ENCODE measurements at regions of chr22 and their contacts with region 1.

Region 1: DNA sequence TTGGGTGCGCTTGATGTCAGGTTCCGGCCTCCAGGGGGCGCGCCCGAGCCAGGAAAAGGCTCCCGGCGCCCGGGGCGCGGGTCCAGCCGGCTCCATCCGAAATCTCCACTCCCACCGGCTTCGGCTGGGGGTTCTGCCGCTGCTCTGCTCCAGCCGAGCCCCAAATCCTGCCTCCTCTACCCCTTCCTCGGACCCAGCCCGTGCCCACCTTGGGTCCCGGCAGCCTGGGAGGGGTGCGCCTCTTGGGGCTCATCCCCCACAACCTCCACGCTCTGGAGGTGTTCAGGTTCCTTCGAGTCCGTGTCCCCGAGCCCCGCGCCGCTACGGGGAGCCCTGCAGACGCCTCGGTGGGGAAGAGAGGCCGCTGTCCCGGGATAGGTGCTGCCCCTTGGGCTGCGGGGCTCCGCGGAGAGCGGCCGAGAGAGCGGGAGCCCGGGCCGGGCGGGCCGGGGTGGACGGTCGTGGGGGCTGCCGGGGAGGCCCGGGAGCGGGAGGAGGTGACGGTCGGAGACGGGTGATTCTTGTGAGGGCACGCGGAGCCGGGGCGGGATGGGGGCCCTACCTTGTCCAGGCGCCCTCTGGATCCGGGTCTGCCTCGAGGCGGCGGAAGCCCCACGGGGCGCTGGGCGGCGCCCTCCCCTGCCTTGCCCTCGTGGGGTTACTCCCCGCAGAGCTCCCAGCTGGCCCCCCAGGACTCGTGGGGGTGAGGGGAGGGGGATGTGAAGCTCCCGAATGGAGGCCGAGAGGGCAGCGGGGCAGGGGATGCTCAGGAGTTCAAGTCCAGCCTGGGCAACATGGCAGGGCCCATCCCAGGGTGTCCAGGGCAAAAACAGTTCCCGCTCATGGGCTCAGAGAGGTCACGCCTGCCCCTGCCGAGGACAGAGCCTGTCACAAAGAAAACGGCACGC is 13.2 kb upstream of the CYB5R3 start:
- DNase-seq: peak; percentile 85
- H3K4me3 ChIP-seq: peak overlapping the region; percentile 64
- H3K27ac ChIP-seq: no peak overlapping the region
- H3K4me1 ChIP-seq: peaks cover 49% of the 10 kb centered on the region
- CTCF ChIP-seq: peak; percentile 91

Region 2: DNA sequence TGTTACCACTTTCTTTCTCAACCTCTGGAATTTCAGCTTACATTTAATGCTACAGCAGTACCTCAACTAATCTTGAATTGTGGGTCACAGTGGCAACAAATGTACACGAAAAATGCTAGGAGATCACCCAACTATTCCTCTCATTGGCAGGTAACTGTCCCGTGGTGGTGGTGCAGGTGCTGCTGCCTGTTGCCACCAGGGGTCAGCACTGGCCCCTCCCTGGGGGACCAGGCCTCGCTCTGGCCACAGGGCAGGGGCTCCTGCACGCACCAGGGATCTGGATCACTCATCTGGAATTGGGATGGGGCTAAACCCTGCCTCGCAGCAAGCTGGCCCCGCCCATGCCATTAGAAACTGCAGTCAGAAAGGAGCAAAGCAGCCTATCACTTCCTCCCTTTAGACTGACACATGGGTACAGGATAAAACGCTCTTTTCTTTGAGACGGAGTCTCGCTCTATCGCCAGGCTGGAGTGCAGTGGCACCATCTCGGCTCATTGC is 40.8 kb before region 1 on chr22:
- CTCF ChIA-PET with region 1: no interaction called
- POLR2A ChIA-PET with region 1: no interaction called
- intact Hi-C with region 1: loop called (anchors 1 kb)
- DNase-seq: peak; percentile 73
- H3K4me3 ChIP-seq: no peak overlapping the region
- H3K27ac ChIP-seq: no peak overlapping the region
- H3K4me1 ChIP-seq: peaks cover 27% of the 10 kb centered on the region
- CTCF ChIP-seq: peak; percentile 96

Region 3: DNA sequence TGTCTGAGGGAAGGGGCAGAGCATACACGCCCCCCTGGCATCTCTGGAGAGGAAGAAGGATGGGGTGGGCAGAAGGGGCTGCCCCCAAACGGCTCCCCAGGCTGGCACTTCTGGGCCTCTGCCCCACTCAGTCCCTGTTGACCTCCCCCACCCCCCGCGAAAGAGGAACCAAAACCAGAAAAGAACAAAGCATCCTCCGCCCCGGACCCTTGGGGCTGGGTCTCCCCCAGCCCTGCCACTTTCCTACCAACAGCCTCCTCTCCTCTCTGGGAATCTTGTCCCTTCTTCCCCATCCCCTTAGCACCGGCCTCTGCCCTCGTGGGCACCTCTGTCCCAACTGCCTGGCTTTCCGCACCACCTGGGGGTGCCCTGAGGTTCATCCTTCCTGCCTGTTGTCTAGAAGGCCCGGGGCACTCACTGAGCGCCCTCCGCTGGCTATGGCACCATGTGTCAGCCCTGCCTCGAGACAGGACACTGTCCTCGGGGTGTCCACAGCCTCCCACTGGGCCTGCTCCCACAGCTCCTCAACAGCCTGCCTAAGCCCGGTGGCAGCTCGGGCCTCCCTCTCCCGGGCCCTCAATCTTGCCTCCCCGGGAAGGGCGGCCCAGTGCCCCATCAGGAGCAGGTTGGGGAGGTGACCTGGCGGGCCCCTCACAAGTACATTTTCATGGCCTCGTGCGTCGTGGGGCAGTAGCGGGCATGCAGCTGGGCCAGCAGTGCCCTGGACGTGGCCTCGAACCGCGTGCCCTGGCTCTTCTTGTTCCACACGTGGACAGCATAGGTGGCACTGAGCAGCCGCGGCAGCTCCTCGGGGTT is 30.1 kb after region 1 on chr22:
- CTCF ChIA-PET with region 1: no interaction called
- POLR2A ChIA-PET with region 1: interaction called, 3 read pairs
- intact Hi-C with region 1: loop called (anchors 1 kb)
- DNase-seq: peak; percentile 72
- H3K4me3 ChIP-seq: peak overlapping the region; percentile 49
- H3K27ac ChIP-seq: peak overlapping the region; percentile 62
- H3K4me1 ChIP-seq: peaks cover 57% of the 10 kb centered on the region
- CTCF ChIP-seq: peak; percentile 89

Region 4: DNA sequence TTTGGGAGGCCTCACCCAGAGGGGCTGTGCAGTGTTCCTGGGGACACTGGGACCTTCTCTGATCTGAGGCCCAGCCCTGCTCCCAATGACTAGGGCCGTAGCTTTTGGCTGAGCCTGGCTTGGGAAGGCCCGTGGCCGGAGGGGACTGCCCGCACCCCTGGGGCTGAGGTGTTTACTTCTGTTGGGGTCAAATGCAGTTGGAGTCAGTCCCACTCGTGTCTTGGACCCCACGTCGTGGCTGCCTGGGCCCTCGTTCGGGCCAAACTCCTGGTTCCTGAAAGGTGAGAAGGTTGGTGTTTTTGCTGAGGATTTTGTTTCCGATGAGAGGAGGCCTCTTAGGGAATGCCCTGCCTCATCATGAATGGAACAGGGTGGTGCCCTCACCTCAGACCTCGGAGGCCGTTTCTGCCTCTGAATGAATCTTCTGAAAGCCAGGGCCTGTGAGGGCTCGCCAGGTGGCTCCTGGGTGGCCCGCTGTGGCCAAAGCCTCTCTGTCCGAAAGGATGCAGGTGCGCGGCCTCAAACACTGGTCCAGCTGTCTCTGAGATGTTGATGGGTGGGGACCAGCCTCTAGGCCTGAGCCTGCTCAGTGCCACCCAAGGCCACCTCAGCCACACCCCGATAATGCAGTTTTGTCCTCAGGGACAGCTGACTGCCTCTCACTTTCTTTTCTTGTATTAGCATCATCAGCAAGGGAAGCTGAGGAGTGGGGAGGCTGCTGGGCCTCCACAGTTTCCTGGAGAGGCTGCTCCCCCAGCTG is 98.6 kb after region 1 on chr22:
- CTCF ChIA-PET with region 1: interaction called, 3 read pairs
- POLR2A ChIA-PET with region 1: interaction called, 6 read pairs
- intact Hi-C with region 1: loop called (anchors 2 kb)
- DNase-seq: peak; percentile 95
- H3K4me3 ChIP-seq: peak overlapping the region; percentile 33
- H3K27ac ChIP-seq: peak overlapping the region; percentile 95
- H3K4me1 ChIP-seq: peaks cover 72% of the 10 kb centered on the region
- CTCF ChIP-seq: no peak

Region 5: GRCh38 chr22:42820066-42820763 is 157.8 kb after region 1 on chr22:
- CTCF ChIA-PET with region 1: no interaction called
- POLR2A ChIA-PET with region 1: no interaction called
- intact Hi-C with region 1: loop called (anchors 1 kb)
- DNase-seq: peak; percentile 80
- H3K4me3 ChIP-seq: peak overlapping the region; percentile 24
- H3K27ac ChIP-seq: no peak overlapping the region
- H3K4me1 ChIP-seq: peaks cover 18% of the 10 kb centered on the region
- CTCF ChIP-seq: peak; percentile 98

Region 6: GRCh38 chr22:42889304-42889703 is 226.9 kb after region 1 on chr22:
- CTCF ChIA-PET with region 1: no interaction called
- POLR2A ChIA-PET with region 1: no interaction called
- intact Hi-C with region 1: no loop called
- DNase-seq: no peak
- H3K4me3 ChIP-seq: no peak overlapping the region
- H3K27ac ChIP-seq: no peak overlapping the region
- H3K4me1 ChIP-seq: no peaks in the 10 kb centered on the region
- CTCF ChIP-seq: no peak